Calu3 (cell line): ENCODE measurements at regions of chr17 and their contacts with region 1.

Region 1: GRCh38 chr17:40371261-40371929 is 6.9 kb upstream of the GJD3 start:
- DNase-seq: no peak
- H3K4me3 Mint-ChIP-seq: no peak overlapping the region
- H3K27ac Mint-ChIP-seq: no peak overlapping the region
- H3K4me1 Mint-ChIP-seq: peaks cover 25% of the 10 kb centered on the region
- H3K27me3 Mint-ChIP-seq: no peaks in the 10 kb centered on the region
- CTCF ChIP-seq: no peak

Region 2: GRCh38 chr17:40005520-40005919 is 365.9 kb before region 1 on chr17:
- CTCF ChIA-PET with region 1: no interaction called
- intact Hi-C with region 1: loop called (anchors 5 kb)
- DNase-seq: no peak
- H3K4me3 Mint-ChIP-seq: no peak overlapping the region
- H3K27ac Mint-ChIP-seq: no peak overlapping the region
- H3K4me1 Mint-ChIP-seq: no peaks in the 10 kb centered on the region
- H3K27me3 Mint-ChIP-seq: peaks cover 21% of the 10 kb centered on the region
- CTCF ChIP-seq: no peak

Region 3: GRCh38 chr17:40268141-40268712 is 103.2 kb before region 1 on chr17:
- CTCF ChIA-PET with region 1: no interaction called
- intact Hi-C with region 1: no loop called
- DNase-seq: peak; percentile 69
- H3K4me3 Mint-ChIP-seq: no peak overlapping the region
- H3K27ac Mint-ChIP-seq: no peak overlapping the region
- H3K4me1 Mint-ChIP-seq: no peaks in the 10 kb centered on the region
- H3K27me3 Mint-ChIP-seq: no peaks in the 10 kb centered on the region
- CTCF ChIP-seq: no peak

Region 4: DNA sequence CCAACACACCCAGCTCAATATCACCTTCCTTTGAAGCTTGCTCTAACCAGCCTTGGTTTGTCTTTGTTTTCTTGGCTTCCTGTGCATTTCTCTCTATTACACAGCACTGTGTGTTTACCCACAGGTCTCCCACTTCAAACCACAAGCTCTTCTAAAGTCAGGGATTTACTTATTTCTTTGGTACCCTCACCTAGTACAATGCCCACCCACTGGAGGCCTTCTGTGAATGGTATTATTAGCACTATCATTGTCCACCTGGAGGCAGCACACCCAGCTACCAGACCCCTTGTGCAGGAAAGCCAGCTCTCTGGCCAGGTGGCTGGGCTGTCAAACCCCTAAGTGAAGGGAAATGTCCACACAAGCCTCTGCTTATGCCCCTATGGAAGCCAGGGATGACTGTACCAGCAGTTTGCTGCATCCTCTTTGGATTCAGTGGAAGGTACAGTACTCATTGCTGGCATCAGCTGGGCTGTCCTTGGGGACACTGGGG is 55.7 kb after region 1 on chr17:
- CTCF ChIA-PET with region 1: no interaction called
- intact Hi-C with region 1: no loop called
- DNase-seq: peak; percentile 45
- H3K4me3 Mint-ChIP-seq: no peak overlapping the region
- H3K27ac Mint-ChIP-seq: no peak overlapping the region
- H3K4me1 Mint-ChIP-seq: no peaks in the 10 kb centered on the region
- H3K27me3 Mint-ChIP-seq: peaks cover 50% of the 10 kb centered on the region
- CTCF ChIP-seq: no peak